ENCODE measurements at regions of chr2 and their contacts with region 1.

Region 1: DNA sequence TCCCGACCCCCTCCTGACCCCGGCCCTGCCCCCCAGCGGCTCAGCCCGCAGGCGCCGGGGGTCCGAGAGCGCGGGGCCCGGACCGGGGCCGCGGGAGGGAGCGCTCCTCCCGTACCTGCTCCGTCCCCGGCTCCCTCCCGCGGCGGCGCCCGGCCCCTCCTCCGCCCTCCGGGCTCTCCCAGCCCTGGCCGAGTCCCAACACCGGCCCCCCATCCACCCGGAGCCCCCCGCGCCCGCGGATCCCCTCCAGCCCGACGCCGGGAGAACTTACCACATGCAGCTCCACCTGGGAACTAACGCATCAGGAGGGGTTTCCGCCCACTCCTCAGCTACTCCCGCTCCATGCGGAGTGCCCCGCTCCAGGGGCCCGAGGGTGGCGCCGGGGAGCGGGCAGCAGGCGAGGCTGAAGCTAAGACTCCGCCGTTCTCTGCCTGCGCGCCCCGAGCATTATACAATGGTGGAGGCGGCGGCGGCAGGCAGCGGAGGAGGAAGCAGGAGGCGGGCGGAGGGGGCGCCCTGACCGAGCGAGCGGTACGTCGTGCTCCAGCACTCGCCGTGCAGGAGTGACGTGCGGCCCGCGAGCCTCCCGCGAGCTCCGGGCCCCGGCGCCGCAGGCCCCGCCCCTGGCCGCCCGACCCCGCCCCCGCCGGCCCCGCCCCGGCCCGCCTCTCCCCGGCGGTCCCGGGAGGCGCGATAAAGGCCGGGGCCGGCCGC is at the start of gene SERTAD2:
- DNase-seq: peak; percentile 87
- ATAC-seq: peak; percentile 85
- H3K4me3 Mint-ChIP-seq: peak within 1 kb of the TSS; percentile 85
- H3K27ac Mint-ChIP-seq: peak within 1 kb of the TSS; percentile 90
- H3K4me1 Mint-ChIP-seq: peaks cover 65% of the 10 kb centered on the region
- H3K27me3 Mint-ChIP-seq: no peaks in the 10 kb centered on the region
- total RNA-seq, gene SERTAD2: 21.4 to 21.8 TPM

Region 2: GRCh38 chr2:64554117-64554516 is 99.4 kb before region 1 on chr2:
- CTCF ChIA-PET with region 1: no interaction called
- POLR2A ChIA-PET with region 1: no interaction called
- DNase-seq: no peak
- ATAC-seq: no peak
- H3K4me3 Mint-ChIP-seq: no peak overlapping the region
- H3K27ac Mint-ChIP-seq: no peak overlapping the region
- H3K4me1 Mint-ChIP-seq: peaks cover 1% of the 10 kb centered on the region
- H3K27me3 Mint-ChIP-seq: no peaks in the 10 kb centered on the region

Region 3: DNA sequence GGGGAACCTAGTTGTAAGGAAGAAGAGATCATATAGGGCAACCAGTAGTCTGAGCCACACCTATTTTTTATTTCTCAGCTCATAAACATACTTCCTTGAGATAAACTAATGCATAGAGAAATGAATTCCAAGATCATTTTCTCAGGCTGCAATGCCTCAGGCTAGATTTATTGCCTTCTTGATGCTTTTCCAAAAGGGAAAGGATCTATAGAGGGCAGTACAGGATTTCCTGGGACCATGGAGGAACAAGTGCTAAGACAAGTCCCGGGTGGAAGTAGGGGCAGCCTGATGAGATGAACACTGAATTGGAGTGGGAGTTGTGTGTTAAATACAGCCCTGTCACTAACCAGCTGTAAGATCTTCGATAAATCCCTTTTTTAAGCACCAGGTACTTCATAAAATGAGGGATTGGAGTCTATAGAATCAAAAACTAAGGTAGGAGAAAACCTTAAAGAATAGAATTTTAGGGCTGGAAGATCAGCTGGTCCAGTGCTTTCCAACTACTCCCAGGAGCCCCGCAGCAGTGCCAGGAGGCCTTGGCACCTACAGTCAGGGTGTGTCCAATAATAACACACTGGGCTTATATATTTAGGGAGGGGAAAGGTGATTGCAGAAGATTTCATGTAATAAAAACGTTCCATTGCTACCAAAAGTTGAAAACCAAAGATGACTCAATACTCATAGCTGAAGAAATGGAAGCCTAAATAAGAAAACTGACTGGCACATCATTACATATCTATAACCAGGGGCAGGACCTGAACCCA is 57.9 kb before region 1 on chr2:
- CTCF ChIA-PET with region 1: no interaction called
- POLR2A ChIA-PET with region 1: no interaction called
- DNase-seq: no peak
- ATAC-seq: no peak
- H3K4me3 Mint-ChIP-seq: no peak overlapping the region
- H3K27ac Mint-ChIP-seq: no peak overlapping the region
- H3K4me1 Mint-ChIP-seq: peaks cover 8% of the 10 kb centered on the region
- H3K27me3 Mint-ChIP-seq: no peaks in the 10 kb centered on the region

Region 4: GRCh38 chr2:64609227-64609941 is 44.1 kb before region 1 on chr2:
- CTCF ChIA-PET with region 1: interaction called, 7 read pairs
- POLR2A ChIA-PET with region 1: interaction called, 19 read pairs
- DNase-seq: peak; percentile 71
- ATAC-seq: peak; percentile 77
- H3K4me3 Mint-ChIP-seq: peak overlapping the region; percentile 61
- H3K27ac Mint-ChIP-seq: peak overlapping the region; percentile 67
- H3K4me1 Mint-ChIP-seq: peaks cover 25% of the 10 kb centered on the region
- H3K27me3 Mint-ChIP-seq: peaks cover 19% of the 10 kb centered on the region

Region 5: GRCh38 chr2:64666810-64667438 is 13.4 kb after region 1 on chr2:
- CTCF ChIA-PET with region 1: interaction called, 112 read pairs
- POLR2A ChIA-PET with region 1: interaction called, 73 read pairs
- DNase-seq: no peak
- ATAC-seq: peak; percentile 79
- H3K4me3 Mint-ChIP-seq: peak overlapping the region; percentile 21
- H3K27ac Mint-ChIP-seq: peak overlapping the region; percentile 74
- H3K4me1 Mint-ChIP-seq: peaks cover 32% of the 10 kb centered on the region
- H3K27me3 Mint-ChIP-seq: no peaks in the 10 kb centered on the region

Region 6: DNA sequence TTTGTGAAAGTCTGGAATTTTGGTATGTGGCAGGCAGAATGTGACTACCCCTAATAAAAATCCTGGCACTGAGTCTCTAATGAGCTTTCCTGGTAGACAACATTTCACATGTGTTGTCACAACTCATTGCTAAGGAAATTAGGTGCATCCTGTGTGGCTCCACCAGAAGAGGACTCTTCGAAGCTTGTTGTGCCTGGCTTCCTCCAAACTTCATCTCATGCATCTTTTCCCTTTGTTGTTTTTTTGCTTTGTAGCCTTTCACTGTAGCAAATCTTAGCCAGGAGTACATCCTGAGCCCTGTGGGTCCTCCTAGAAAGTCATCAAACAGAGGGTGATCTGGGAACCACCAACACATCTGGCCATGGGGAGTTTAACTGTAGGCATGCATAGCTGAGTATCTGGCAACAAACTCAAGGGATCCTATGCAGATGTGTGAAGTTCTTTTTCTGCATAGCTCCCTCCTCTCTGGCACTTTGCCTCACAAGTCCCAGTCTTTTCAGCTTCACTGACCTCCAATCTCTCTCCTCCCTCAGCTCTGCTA is 42.3 kb after region 1 on chr2:
- CTCF ChIA-PET with region 1: interaction called, 8 read pairs
- POLR2A ChIA-PET with region 1: interaction called, 10 read pairs
- DNase-seq: no peak
- ATAC-seq: no peak
- H3K4me3 Mint-ChIP-seq: no peak overlapping the region
- H3K27ac Mint-ChIP-seq: peak overlapping the region; percentile 64
- H3K4me1 Mint-ChIP-seq: peaks cover 54% of the 10 kb centered on the region
- H3K27me3 Mint-ChIP-seq: no peaks in the 10 kb centered on the region

Region 7: GRCh38 chr2:64737547-64737946 is 84.0 kb after region 1 on chr2:
- CTCF ChIA-PET with region 1: interaction called, 276 read pairs
- POLR2A ChIA-PET with region 1: interaction called, 77 read pairs
- DNase-seq: no peak
- ATAC-seq: peak; percentile 72
- H3K4me3 Mint-ChIP-seq: peak overlapping the region; percentile 24
- H3K27ac Mint-ChIP-seq: peak overlapping the region; percentile 59
- H3K4me1 Mint-ChIP-seq: peaks cover 51% of the 10 kb centered on the region
- H3K27me3 Mint-ChIP-seq: no peaks in the 10 kb centered on the region

Region 8: GRCh38 chr2:64767670-64768468 is 114.4 kb after region 1 on chr2:
- CTCF ChIA-PET with region 1: interaction called, 20 read pairs
- POLR2A ChIA-PET with region 1: interaction called, 19 read pairs
- DNase-seq: peak; percentile 89
- ATAC-seq: peak; percentile 87
- H3K4me3 Mint-ChIP-seq: peak overlapping the region; percentile 81
- H3K27ac Mint-ChIP-seq: peak overlapping the region; percentile 92
- H3K4me1 Mint-ChIP-seq: peaks cover 34% of the 10 kb centered on the region
- H3K27me3 Mint-ChIP-seq: peaks cover 4% of the 10 kb centered on the region

Region 9: GRCh38 chr2:64865073-64865830 is 211.7 kb after region 1 on chr2:
- CTCF ChIA-PET with region 1: interaction called, 25 read pairs
- POLR2A ChIA-PET with region 1: interaction called, 3 read pairs
- DNase-seq: peak; percentile 69
- ATAC-seq: peak; percentile 94
- H3K4me3 Mint-ChIP-seq: peak overlapping the region; percentile 67
- H3K27ac Mint-ChIP-seq: no peak overlapping the region
- H3K4me1 Mint-ChIP-seq: no peaks in the 10 kb centered on the region
- H3K27me3 Mint-ChIP-seq: peaks cover 2% of the 10 kb centered on the region